ENCODE measurements at regions of chr9 and their contacts with region 1.

Region 1: DNA sequence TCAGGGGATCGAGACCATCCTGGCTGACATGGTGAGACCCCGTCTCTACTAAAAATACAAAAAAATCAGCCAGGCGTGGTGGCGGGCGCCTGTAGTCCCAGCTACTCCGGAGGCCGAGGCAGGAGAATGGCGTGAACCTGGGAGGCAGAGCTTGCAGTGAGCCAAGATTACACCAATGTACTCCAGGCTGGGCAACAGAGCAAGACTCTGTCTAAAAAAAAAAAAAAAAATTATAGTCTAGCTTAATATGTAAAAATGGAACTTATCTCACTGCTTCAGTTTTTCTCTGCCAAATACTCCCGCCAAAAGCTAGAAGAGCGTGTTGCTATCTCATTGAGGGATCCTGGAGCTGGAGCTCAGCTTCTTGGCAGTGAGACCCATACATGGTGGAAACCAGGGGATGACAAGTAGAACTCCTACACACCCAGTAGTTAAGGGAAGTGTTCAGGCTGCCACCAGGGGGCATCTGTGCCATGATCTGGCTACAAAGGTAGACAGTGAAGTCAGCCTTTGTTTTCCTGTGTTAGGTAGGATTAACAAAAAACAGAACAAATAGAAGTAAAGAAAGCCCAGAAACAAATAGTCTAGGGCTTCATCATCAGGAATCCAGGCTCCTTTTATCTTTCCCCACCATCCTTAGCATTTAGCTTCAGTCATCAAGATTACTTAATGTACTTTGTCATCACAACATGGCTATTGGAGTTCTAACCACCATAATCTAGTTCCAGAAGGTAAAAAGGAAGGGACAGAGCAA is 33.6 kb upstream of the GLIPR2 start:
- DNase-seq: peak; percentile 92
- H3K4me3 Mint-ChIP-seq: no peak overlapping the region
- H3K27ac Mint-ChIP-seq: no peak overlapping the region
- H3K4me1 Mint-ChIP-seq: peaks cover 8% of the 10 kb centered on the region
- H3K27me3 Mint-ChIP-seq: no peaks in the 10 kb centered on the region

Region 2: DNA sequence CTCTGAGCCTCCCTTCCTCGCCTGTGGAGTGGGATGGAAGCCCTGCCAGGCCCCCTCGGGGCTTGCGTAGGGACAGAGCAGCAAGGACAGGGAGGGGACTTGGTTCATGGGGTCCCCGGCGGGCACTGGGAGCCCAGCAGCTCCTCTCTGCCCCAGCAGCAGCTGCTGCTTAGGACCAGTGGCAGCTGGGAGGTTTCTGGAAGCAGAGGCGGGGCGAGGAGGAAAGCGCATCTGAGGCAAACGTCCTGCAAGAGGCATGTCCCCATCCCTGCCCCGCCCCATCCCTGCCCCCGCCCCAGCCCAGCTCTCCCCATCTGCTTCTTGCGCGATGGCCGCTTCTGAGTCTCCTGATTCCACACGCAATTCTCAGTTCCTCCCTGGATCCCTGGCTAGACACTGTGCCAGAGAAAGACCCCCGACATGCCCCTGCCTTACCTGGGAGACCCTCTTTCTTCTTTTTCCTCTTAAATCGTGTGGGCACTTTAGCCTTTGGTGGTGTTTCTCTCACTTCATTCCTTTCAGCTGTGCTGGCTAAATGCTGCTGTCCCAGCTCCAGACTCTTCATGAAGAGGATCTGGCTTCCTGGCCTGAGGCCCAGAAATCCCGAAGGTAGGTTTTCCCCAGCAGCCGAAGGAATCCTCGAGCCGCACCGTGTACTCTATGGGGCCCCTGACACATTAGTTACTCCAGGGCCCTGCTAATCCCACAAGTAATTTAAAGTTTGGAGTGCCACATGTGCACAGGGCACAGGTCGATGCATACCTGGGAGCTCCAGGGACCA is 140.6 kb before region 1 on chr9:
- CTCF ChIA-PET with region 1: no interaction called
- POLR2A ChIA-PET with region 1: no interaction called
- DNase-seq: no peak
- H3K4me3 Mint-ChIP-seq: no peak overlapping the region
- H3K27ac Mint-ChIP-seq: no peak overlapping the region
- H3K4me1 Mint-ChIP-seq: no peaks in the 10 kb centered on the region
- H3K27me3 Mint-ChIP-seq: peaks cover 20% of the 10 kb centered on the region

Region 3: GRCh38 chr9:36118706-36119105 is 15.8 kb after region 1 on chr9:
- CTCF ChIA-PET with region 1: interaction called, 14 read pairs
- POLR2A ChIA-PET with region 1: no interaction called
- DNase-seq: no peak
- H3K4me3 Mint-ChIP-seq: no peak overlapping the region
- H3K27ac Mint-ChIP-seq: no peak overlapping the region
- H3K4me1 Mint-ChIP-seq: no peaks in the 10 kb centered on the region
- H3K27me3 Mint-ChIP-seq: no peaks in the 10 kb centered on the region

Region 4: GRCh38 chr9:36142510-36143244 is 39.8 kb after region 1 on chr9:
- CTCF ChIA-PET with region 1: interaction called, 17 read pairs
- POLR2A ChIA-PET with region 1: no interaction called
- DNase-seq: no peak
- H3K4me3 Mint-ChIP-seq: peak overlapping the region; percentile 80
- H3K27ac Mint-ChIP-seq: peak overlapping the region; percentile 94
- H3K4me1 Mint-ChIP-seq: peaks cover 98% of the 10 kb centered on the region
- H3K27me3 Mint-ChIP-seq: no peaks in the 10 kb centered on the region

Region 5: GRCh38 chr9:36190388-36191287 is 87.7 kb after region 1 on chr9 and contains the start of gene CLTA:
- CTCF ChIA-PET with region 1: interaction called, 12 read pairs
- POLR2A ChIA-PET with region 1: no interaction called
- DNase-seq: peak; percentile 98
- H3K4me3 Mint-ChIP-seq: peak within 1 kb of the TSS; percentile 97
- H3K27ac Mint-ChIP-seq: peak within 1 kb of the TSS; percentile 93
- H3K4me1 Mint-ChIP-seq: peaks cover 55% of the 10 kb centered on the region
- H3K27me3 Mint-ChIP-seq: peaks cover 8% of the 10 kb centered on the region
- total RNA-seq, gene CLTA: 156 to 158 TPM

Region 6: GRCh38 chr9:36245906-36246305 is 143.0 kb after region 1 on chr9:
- CTCF ChIA-PET with region 1: no interaction called
- POLR2A ChIA-PET with region 1: no interaction called
- DNase-seq: no peak
- H3K4me3 Mint-ChIP-seq: no peak overlapping the region
- H3K27ac Mint-ChIP-seq: no peak overlapping the region
- H3K4me1 Mint-ChIP-seq: peaks cover 8% of the 10 kb centered on the region
- H3K27me3 Mint-ChIP-seq: no peaks in the 10 kb centered on the region

Measured in activated CD4-positive, alpha-beta T cell treated with anti-CD3 and anti-CD28 coated beads, Interleukin-2, amount 10 ng/mL, durations not matched to agents 7 days and 5 days (primary cell).